MCF 10A (cell line): ENCODE measurements at regions of chr18 and their contacts with region 1.

Region 1: GRCh38 chr18:48222118-48222517 is 187.1 kb downstream of the ZBTB7C start:
- DNase-seq: peak; percentile 96
- H3K4me3 Mint-ChIP-seq: no peak overlapping the region
- H3K27ac Mint-ChIP-seq: no peak overlapping the region
- H3K4me1 Mint-ChIP-seq: peaks cover 2% of the 10 kb centered on the region
- H3K27me3 Mint-ChIP-seq: no peaks in the 10 kb centered on the region
- CTCF ChIP-seq: no peak

Region 2: DNA sequence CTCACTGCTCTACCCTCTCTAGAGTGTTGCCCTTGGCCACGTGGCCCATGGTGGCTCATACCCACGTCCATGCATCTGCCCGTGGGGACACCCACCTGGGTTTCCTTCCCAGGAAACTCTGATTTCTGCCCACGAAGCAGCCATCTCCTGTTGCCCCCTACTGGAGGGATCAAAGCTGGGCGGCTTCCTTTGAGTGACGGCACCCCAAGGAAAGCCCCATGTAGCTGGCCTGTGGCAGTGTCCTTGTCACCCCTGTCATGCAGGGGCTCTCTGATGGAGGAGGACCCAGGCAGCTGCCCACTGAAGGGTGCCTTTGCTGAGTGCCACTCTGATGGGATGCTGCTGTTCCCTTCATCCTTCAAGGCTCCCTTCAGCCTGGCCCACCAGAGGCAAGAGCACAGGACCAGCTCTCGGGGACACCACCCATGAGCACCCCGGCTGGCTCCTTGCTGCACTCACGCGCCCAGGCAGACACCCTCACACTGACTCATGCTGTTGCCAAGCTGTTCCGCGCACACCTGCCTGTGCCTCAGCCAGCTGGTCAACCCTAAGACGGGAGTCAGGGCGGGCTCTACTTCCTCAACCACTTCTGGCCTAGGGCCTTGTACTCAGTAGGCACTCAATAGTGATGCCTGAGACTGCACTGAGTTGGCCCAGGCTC is 417.8 kb after region 1 on chr18:
- CTCF ChIA-PET with region 1: no interaction called
- POLR2A ChIA-PET with region 1: no interaction called
- intact Hi-C with region 1: loop called (anchors 10 kb)
- DNase-seq: peak; percentile 13
- H3K4me3 Mint-ChIP-seq: no peak overlapping the region
- H3K27ac Mint-ChIP-seq: no peak overlapping the region
- H3K4me1 Mint-ChIP-seq: peaks cover 11% of the 10 kb centered on the region
- H3K27me3 Mint-ChIP-seq: no peaks in the 10 kb centered on the region
- CTCF ChIP-seq: no peak